ENCODE measurements at regions of chr22 and their contacts with region 1.

Region 1: DNA sequence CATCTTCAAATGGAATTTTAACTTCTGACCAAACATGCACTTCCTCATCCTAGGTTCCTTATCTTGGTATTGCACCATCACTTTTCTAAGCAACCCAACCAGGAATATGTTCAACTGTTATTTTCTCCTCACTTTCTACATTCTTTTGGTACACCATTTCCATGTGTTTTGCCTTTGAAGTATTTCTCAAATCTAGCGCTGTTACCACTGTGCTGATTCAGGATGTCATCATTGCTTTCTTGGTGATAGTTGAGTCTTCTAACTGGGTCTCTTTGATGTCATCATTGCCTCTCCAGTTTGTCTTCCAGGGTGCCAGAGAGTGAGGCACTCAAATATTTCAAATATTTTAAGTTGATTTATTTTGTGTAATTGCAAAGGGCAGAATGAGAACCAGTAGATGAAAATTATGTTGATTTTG is 47.5 kb downstream of the HORMAD2 start:
- DNase-seq: no peak
- ATAC-seq: no peak
- H3K4me3 ChIP-seq: no peak overlapping the region
- H3K4me3 Mint-ChIP-seq: no peak overlapping the region
- H3K27ac ChIP-seq: no peak overlapping the region
- H3K27ac Mint-ChIP-seq: no peak overlapping the region
- H3K4me1 ChIP-seq: no peaks in the 10 kb centered on the region
- H3K4me1 Mint-ChIP-seq: no peaks in the 10 kb centered on the region
- H3K27me3 ChIP-seq: no peaks in the 10 kb centered on the region
- H3K27me3 Mint-ChIP-seq: no peaks in the 10 kb centered on the region

Region 2: GRCh38 chr22:30314915-30315314 is 187.2 kb after region 1 on chr22:
- CTCF ChIA-PET with region 1: interaction called in 1 of 2 experiments, 11 read pairs
- POLR2A ChIA-PET with region 1: no interaction called
- DNase-seq: peak in 10 of 35 experiments; percentile 17 to 70 (median 32)
- ATAC-seq: peak in 3 of 4 experiments; percentile 46 to 70 (median 49)
- H3K4me3 ChIP-seq: no peak overlapping the region
- H3K4me3 Mint-ChIP-seq: peak overlapping the region in 2 of 3 donors; percentile 29 to 73
- H3K27ac ChIP-seq: peak overlapping the region; percentile 52
- H3K27ac Mint-ChIP-seq: peak overlapping the region; percentile 91
- H3K4me1 ChIP-seq: peaks cover 76 to 99% of the 10 kb centered on the region in 2 experiments
- H3K4me1 Mint-ChIP-seq: peaks cover 97 to 98% (median 98%) of the 10 kb centered on the region in 3 donors
- H3K27me3 ChIP-seq: no peaks in the 10 kb centered on the region
- H3K27me3 Mint-ChIP-seq: no peaks in the 10 kb centered on the region

Measured in T-cell (primary cell).